Activated CD4-positive, alpha-beta T cell treated with anti-CD3 and anti-CD28 coated beads for 36 hours (primary cell): ENCODE measurements at regions of chr1 and their contacts with region 1.

Region 1: GRCh38 chr1:163321311-163322305 is at the start of gene NUF2:
- DNase-seq: peak; percentile 98
- ATAC-seq: peak; percentile 93
- H3K4me3 Mint-ChIP-seq: peak within 1 kb of the TSS; percentile 89
- H3K27ac Mint-ChIP-seq: peak within 1 kb of the TSS; percentile 98
- H3K4me1 Mint-ChIP-seq: peaks cover 8% of the 10 kb centered on the region
- H3K27me3 Mint-ChIP-seq: no peaks in the 10 kb centered on the region
- total RNA-seq, gene NUF2: 57.6 to 58.4 TPM

Region 2: GRCh38 chr1:161772397-161772796 is 1549.2 kb before region 1 on chr1:
- CTCF ChIA-PET with region 1: no interaction called
- POLR2A ChIA-PET with region 1: no interaction called
- intact Hi-C with region 1: loop called in 1 of 2 experiments (anchors 5 kb)
- DNase-seq: no peak
- ATAC-seq: peak; percentile 64
- H3K4me3 Mint-ChIP-seq: no peak overlapping the region
- H3K27ac Mint-ChIP-seq: no peak overlapping the region
- H3K4me1 Mint-ChIP-seq: peaks cover 22% of the 10 kb centered on the region
- H3K27me3 Mint-ChIP-seq: no peaks in the 10 kb centered on the region

Region 3: DNA sequence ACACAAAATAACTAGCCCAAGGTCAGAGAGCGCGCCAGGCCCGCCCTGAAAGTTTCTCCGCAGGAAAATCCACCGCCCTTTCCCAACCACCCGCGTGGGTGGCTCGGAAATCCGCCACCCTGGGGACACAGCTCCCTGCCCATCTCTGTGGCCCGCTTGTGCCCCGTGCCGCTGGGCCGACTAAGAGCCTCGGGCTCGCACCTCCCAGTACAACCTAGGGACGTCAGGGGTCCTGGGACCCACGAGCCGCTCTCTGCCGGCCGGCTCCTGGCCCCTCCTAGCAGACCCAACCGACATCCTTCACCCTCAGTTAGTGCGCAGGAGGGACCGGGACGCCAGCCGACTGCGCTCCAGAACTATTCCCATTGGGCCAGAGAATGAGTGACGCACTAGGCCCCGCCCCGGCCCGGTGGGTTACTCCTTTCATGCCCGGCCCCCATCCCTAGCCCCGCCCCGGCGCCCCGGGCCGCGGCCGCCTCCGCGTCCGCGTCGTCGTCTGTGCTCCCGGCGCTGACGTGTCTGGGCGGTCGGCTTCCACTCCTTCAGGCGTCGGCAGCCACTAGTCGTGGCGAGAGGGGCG is 760.5 kb before region 1 on chr1:
- CTCF ChIA-PET with region 1: no interaction called
- POLR2A ChIA-PET with region 1: no interaction called
- intact Hi-C with region 1: loop called (anchors 1 to 2 kb)
- DNase-seq: peak; percentile 99
- ATAC-seq: peak; percentile 98
- H3K4me3 Mint-ChIP-seq: peak overlapping the region; percentile 79
- H3K27ac Mint-ChIP-seq: peak overlapping the region; percentile 94
- H3K4me1 Mint-ChIP-seq: peaks cover 35% of the 10 kb centered on the region
- H3K27me3 Mint-ChIP-seq: no peaks in the 10 kb centered on the region

Region 4: GRCh38 chr1:162854245-162854882 is 467.2 kb before region 1 on chr1:
- CTCF ChIA-PET with region 1: interaction called, 7 read pairs
- POLR2A ChIA-PET with region 1: no interaction called
- intact Hi-C with region 1: loop called in 1 of 2 experiments (anchors 1 kb)
- DNase-seq: peak; percentile 71
- ATAC-seq: peak; percentile 58
- H3K4me3 Mint-ChIP-seq: no peak overlapping the region
- H3K27ac Mint-ChIP-seq: no peak overlapping the region
- H3K4me1 Mint-ChIP-seq: no peaks in the 10 kb centered on the region
- H3K27me3 Mint-ChIP-seq: peaks cover 1% of the 10 kb centered on the region

Region 5: GRCh38 chr1:163290025-163290640 is 31.5 kb before region 1 on chr1:
- CTCF ChIA-PET with region 1: no interaction called
- POLR2A ChIA-PET with region 1: no interaction called
- intact Hi-C with region 1: no loop called
- DNase-seq: no peak
- ATAC-seq: no peak
- H3K4me3 Mint-ChIP-seq: no peak overlapping the region
- H3K27ac Mint-ChIP-seq: no peak overlapping the region
- H3K4me1 Mint-ChIP-seq: peaks cover 7% of the 10 kb centered on the region
- H3K27me3 Mint-ChIP-seq: no peaks in the 10 kb centered on the region

Region 6: GRCh38 chr1:164558461-164559341 is 1237.1 kb after region 1 on chr1 and contains the start of gene PBX1:
- CTCF ChIA-PET with region 1: no interaction called
- POLR2A ChIA-PET with region 1: no interaction called
- intact Hi-C with region 1: loop called in 1 of 2 experiments (anchors 5 kb)
- DNase-seq: peak; percentile 87
- ATAC-seq: peak; percentile 100
- H3K4me3 Mint-ChIP-seq: peak within 1 kb of the TSS; percentile 57
- H3K27ac Mint-ChIP-seq: no peak within 1 kb of the TSS
- H3K4me1 Mint-ChIP-seq: peaks cover 5% of the 10 kb centered on the region
- H3K27me3 Mint-ChIP-seq: peaks cover 24% of the 10 kb centered on the region
- total RNA-seq, gene PBX1: 0.18 to 0.37 TPM